Activated CD8-positive, alpha-beta T cell treated with anti-CD3 and anti-CD28 coated beads for 36 hours (primary cell): ENCODE measurements at regions of chr9 and their contacts with region 1.

Region 1: DNA sequence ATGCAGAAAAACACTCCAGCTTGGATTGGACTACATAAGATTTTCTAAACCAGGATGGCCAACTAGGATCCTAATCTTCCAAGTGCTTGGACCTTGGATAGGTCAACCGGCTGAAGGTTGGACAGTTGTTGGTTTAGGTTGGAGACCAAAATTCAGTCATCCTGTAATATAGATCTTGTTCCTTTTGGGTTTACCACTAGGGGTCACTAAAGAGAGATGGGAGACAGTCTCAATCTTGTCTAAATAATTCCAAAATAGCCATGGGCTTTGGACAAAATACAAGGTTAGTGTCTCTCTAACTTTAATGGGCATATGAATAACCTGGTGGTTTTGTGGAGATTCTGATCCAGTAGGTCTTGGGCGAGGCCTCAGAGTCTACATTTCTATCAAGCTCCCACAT is 148.7 kb upstream of the ERCC6L2 start:
- DNase-seq: no peak
- ATAC-seq: no peak
- H3K4me3 Mint-ChIP-seq: no peak overlapping the region
- H3K27ac Mint-ChIP-seq: no peak overlapping the region
- H3K4me1 Mint-ChIP-seq: peaks cover 44% of the 10 kb centered on the region
- H3K27me3 Mint-ChIP-seq: peaks cover 9% of the 10 kb centered on the region
- CTCF ChIP-seq: peak; percentile 74

Region 2: GRCh38 chr9:95793924-95794828 is 67.4 kb after region 1 on chr9:
- CTCF ChIA-PET with region 1: no interaction called
- POLR2A ChIA-PET with region 1: no interaction called
- intact Hi-C with region 1: no loop called
- DNase-seq: no peak
- ATAC-seq: no peak
- H3K4me3 Mint-ChIP-seq: no peak overlapping the region
- H3K27ac Mint-ChIP-seq: no peak overlapping the region
- H3K4me1 Mint-ChIP-seq: no peaks in the 10 kb centered on the region
- H3K27me3 Mint-ChIP-seq: peaks cover 4% of the 10 kb centered on the region
- CTCF ChIP-seq: no peak

Region 3: GRCh38 chr9:95822583-95823431 is 96.1 kb after region 1 on chr9:
- CTCF ChIA-PET with region 1: no interaction called
- POLR2A ChIA-PET with region 1: no interaction called
- intact Hi-C with region 1: loop called (anchors 1 kb)
- DNase-seq: peak; percentile 80
- ATAC-seq: peak; percentile 80
- H3K4me3 Mint-ChIP-seq: no peak overlapping the region
- H3K27ac Mint-ChIP-seq: peak overlapping the region; percentile 45
- H3K4me1 Mint-ChIP-seq: peaks cover 22% of the 10 kb centered on the region
- H3K27me3 Mint-ChIP-seq: peaks cover 4% of the 10 kb centered on the region
- CTCF ChIP-seq: no peak